ENCODE measurements at regions of chr11 and their contacts with region 1.

Region 1: DNA sequence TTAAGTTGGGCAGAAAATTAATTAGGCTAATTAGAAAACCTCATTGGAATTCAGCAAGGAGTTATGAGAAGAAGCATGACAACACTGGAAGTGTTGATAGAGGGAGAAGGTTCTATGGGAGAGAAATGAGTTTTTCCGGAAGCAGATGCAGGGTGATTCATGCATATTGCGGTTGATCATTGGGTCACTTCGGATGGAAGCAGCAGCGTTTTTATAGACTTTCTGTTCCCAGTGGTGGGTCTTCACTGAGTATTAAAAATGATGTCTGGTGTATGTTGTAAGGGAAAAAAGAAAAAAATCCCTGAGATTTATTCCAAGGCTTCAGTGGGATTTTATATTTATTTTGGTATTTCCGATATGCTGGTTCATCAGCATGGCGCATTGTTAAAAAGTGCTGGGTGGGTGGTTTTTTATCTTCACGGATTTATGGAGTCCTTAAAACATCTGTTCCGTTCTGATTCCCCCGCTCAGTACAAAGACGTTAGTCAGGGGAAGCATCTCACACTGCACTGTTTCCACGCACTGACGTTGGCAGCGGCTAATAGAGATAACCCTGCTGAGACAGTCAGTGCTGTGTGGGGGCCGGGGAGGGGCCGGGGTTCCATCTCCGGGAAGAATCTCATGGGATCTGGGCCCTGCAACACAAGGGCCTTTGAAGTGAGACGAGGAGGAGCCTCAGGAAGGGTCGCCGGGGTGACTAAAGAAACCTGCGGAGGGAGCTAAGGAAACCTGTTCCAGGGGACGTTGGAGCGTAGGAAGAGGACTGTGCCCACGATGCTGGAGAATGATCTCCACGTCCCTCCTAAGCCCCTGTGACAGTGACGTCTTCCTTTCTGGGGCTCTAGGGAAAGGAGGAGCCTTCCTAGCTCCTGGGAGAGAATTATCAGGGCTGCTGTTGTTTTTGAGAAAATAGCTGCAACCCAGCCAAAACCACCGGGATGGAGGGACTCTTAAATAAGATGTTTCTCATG is 390.0 kb downstream of the NTM start:
- DNase-seq: peak; percentile 79

Region 2: GRCh38 chr11:131899950-131900580 is 139.7 kb after region 1 on chr11:
- intact Hi-C with region 1: loop called (anchors 5 kb)
- DNase-seq: no peak